ENCODE measurements at regions of chr11 and their contacts with region 1.

Region 1: GRCh38 chr11:116691771-116692177 is 81.0 kb downstream of the BUD13 start:
- DNase-seq: peak in 1 of 2 experiments; percentile 69
- ATAC-seq: peak; percentile 71 to 91; a peak in 4 of 6 replicates
- H3K4me3 ChIP-seq: no peak overlapping the region
- H3K27ac ChIP-seq: no peak overlapping the region
- H3K4me1 ChIP-seq: no peaks in the 10 kb centered on the region
- CTCF ChIP-seq: peak; percentile 65
- EP300 ChIP-seq: no peak
- POLR2A ChIP-seq: no peak
- RAD21 ChIP-seq: peak; percentile 82 to 85

Region 2: DNA sequence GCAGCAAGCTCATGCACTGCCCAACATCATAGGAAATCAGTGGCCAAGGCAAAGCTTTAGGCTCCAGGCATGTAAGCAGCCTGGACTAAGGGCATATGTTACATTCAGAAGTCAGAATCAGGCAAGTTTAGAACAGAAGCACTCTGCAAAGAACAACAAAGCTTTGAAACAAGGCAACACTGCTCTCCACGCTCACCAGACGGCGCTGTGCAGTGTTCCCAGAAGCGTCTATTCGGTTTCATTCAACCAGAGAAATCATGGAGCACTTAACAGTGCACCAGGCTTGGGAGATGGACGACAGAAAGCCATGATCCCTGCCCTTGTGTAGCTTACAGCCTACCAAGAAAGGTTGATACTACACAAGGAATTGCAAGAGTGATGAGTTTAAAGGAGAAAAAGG is 474.8 kb before region 1 on chr11:
- CTCF ChIA-PET with region 1: interaction called, 16 read pairs
- POLR2A ChIA-PET with region 1: no interaction called
- DNase-seq: peak; percentile 12 to 48
- ATAC-seq: peak; percentile 80 to 83; a peak in 5 of 6 replicates
- H3K4me3 ChIP-seq: no peak overlapping the region
- H3K27ac ChIP-seq: no peak overlapping the region
- H3K4me1 ChIP-seq: no peaks in the 10 kb centered on the region
- CTCF ChIP-seq: peak; percentile 53
- EP300 ChIP-seq: no peak
- POLR2A ChIP-seq: no peak
- RAD21 ChIP-seq: peak; percentile 35 to 38; a peak in 2 of 5 replicates

Region 3: GRCh38 chr11:116454020-116454645 is 237.6 kb before region 1 on chr11:
- CTCF ChIA-PET with region 1: interaction called, 10 read pairs
- POLR2A ChIA-PET with region 1: no interaction called
- DNase-seq: peak; percentile 8 to 22
- ATAC-seq: peak; percentile 39 to 70; a peak in 3 of 6 replicates
- H3K4me3 ChIP-seq: no peak overlapping the region
- H3K27ac ChIP-seq: no peak overlapping the region
- H3K4me1 ChIP-seq: no peaks in the 10 kb centered on the region
- CTCF ChIP-seq: peak; percentile 27; the same call in 2 of the 3 replicates
- EP300 ChIP-seq: no peak
- POLR2A ChIP-seq: no peak
- RAD21 ChIP-seq: peak; percentile 36 to 44; a peak in 3 of 5 replicates

Region 4: GRCh38 chr11:116488836-116489389 is 202.9 kb before region 1 on chr11:
- CTCF ChIA-PET with region 1: no interaction called
- POLR2A ChIA-PET with region 1: no interaction called
- DNase-seq: no peak
- ATAC-seq: no peak
- H3K4me3 ChIP-seq: no peak overlapping the region
- H3K27ac ChIP-seq: no peak overlapping the region
- H3K4me1 ChIP-seq: no peaks in the 10 kb centered on the region
- CTCF ChIP-seq: no peak
- EP300 ChIP-seq: no peak
- POLR2A ChIP-seq: no peak
- RAD21 ChIP-seq: no peak

Region 5: DNA sequence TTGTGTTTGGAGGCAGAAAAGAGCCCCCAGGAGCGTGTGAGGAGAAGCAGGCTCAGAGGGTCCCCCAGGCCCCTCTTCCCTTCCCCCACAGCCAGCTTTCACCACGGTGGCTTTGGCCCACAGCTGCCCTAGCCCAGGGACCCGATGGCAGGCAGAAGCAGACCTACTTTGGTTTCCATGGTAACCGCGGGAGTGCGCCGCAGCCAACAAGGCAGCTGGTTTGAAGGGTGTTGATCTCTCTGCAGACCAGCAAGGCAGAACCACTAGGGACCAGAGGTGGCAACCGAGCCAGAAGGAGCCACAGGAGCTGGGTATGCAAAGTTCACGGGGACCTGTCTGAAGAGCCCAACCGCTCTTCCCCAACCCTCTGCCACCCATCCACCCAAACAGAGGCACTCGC is 11.6 kb after region 1 on chr11:
- CTCF ChIA-PET with region 1: interaction called, 19 read pairs
- POLR2A ChIA-PET with region 1: no interaction called
- DNase-seq: no peak
- ATAC-seq: no peak
- H3K4me3 ChIP-seq: no peak overlapping the region
- H3K27ac ChIP-seq: no peak overlapping the region
- H3K4me1 ChIP-seq: no peaks in the 10 kb centered on the region
- CTCF ChIP-seq: no peak
- EP300 ChIP-seq: no peak
- POLR2A ChIP-seq: no peak
- RAD21 ChIP-seq: no peak